MCF 10A (cell line): ENCODE measurements at regions of chr12 and their contacts with region 1.

Region 1: DNA sequence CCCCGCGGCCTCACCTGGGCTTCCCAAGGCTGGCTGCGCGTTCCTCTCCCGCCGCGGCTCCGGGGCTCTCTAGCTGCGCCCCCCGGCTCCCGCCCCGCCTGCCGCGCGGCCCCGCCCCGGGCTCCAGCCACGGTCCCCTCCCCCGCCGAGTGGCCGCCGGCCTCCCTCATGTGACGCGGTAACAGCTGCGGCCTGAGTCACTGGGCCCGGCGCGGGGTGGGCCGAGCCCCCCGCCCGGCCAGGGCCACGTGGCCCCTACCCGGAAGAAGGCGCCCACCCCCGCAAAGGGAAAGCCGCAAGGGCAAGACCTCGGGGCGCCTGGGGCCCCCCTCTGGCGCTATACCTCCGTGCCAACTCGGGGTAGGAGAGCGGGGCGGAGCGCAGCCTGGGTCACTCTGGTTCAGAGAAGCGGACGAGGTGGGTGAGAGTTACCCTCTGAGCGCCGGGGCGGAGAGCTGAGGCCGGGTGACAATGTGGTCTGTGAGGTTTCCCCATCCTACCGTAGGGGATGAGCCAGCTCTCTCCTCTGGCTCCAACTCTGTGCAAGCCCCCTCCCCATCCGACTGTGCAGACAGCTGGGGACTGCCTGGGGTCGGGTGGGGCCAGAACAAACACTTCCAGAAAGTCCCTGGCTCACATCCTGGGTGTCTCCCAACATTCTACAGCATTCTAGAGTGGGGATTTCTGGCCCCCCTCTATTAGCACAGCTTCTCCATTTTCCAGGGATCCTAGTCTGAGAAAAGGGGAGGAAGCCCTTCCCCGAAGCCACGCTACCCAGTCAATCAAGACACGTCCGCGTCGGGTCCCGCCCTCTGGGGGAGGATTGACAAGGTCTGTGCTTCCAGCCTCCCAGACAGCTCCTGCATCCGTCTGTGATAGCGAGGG is at the start of gene CD63:
- DNase-seq: peak; percentile 93
- H3K4me3 Mint-ChIP-seq: peak within 1 kb of the TSS; percentile 76
- H3K27ac Mint-ChIP-seq: peak within 1 kb of the TSS; percentile 82
- H3K4me1 Mint-ChIP-seq: peaks cover 22% of the 10 kb centered on the region
- H3K27me3 Mint-ChIP-seq: no peaks in the 10 kb centered on the region
- CTCF ChIP-seq: no peak
- total RNA-seq, gene CD63: 552 and 724 TPM in 2 replicates

Region 2: GRCh38 chr12:55681142-55682077 is 47.8 kb before region 1 on chr12:
- CTCF ChIA-PET with region 1: no interaction called
- POLR2A ChIA-PET with region 1: no interaction called
- intact Hi-C with region 1: loop called (anchors 2 kb)
- DNase-seq: peak; percentile 75
- H3K4me3 Mint-ChIP-seq: no peak overlapping the region
- H3K27ac Mint-ChIP-seq: no peak overlapping the region
- H3K4me1 Mint-ChIP-seq: peaks cover 9% of the 10 kb centered on the region
- H3K27me3 Mint-ChIP-seq: peaks cover 25% of the 10 kb centered on the region
- CTCF ChIP-seq: peak; percentile 37